B cell (primary cell): ENCODE measurements at regions of chr1 and their contacts with region 1.

Region 1: GRCh38 chr1:159071970-159072582 is 4.5 kb downstream of the AIM2 start:
- DNase-seq: peak; percentile 69
- ATAC-seq: no peak
- H3K4me3 ChIP-seq: no peak overlapping the region
- H3K4me3 Mint-ChIP-seq: peak overlapping the region; percentile 68
- H3K27ac ChIP-seq: peak overlapping the region in 1 of 2 donors; percentile 89
- H3K27ac Mint-ChIP-seq: peak overlapping the region; percentile 86
- H3K4me1 ChIP-seq: peaks cover 56 to 62% of the 10 kb centered on the region in 2 donors
- H3K4me1 Mint-ChIP-seq: peaks cover 65% of the 10 kb centered on the region
- H3K27me3 ChIP-seq: no peaks in the 10 kb centered on the region
- H3K27me3 Mint-ChIP-seq: no peaks in the 10 kb centered on the region
- CTCF ChIP-seq: peak; percentile 94

Region 2: DNA sequence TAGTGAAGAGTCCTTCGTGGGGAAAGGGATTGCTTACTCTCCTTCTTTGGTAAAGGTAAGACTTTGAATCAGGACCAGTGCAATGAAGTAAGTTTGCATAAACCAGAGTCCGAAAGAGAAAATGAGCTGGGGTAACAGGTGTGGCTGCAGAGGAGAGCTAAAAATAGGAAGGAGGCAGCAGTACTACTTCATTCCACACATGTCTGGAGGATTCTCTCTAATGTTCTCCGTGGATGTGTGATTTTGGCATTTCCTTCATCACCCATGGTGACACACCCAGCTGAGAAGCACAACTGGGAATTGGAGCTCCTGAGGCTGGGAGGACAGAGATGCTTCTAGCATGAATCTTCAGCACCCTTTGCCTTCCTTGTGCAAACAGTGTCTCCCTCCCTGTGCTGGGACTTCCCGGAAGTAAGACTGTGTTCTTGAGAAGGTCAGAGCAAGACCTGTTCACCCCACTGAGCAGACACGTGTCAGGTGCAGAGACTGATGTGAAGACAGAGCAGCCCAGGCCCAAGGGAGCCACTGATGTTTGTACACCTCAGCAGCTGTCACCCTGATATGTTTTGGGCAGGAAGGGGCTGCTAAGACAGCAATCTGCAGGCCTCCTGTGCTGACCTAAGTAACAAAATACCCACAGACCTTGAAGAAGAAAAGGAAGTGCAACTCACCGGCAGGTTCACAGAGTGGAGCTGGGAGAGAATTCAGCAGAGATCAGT is 1265.5 kb before region 1 on chr1:
- CTCF ChIA-PET with region 1: no interaction called
- POLR2A ChIA-PET with region 1: no interaction called
- intact Hi-C with region 1: loop called (anchors 5 kb)
- DNase-seq: peak; percentile 92
- ATAC-seq: peak; percentile 92
- H3K4me3 ChIP-seq: peak overlapping the region; percentile 2 to 45 (median 28)
- H3K4me3 Mint-ChIP-seq: peak overlapping the region; percentile 84
- H3K27ac ChIP-seq: peak overlapping the region; percentile 71 to 83
- H3K27ac Mint-ChIP-seq: peak overlapping the region; percentile 87
- H3K4me1 ChIP-seq: peaks cover 86 to 98% of the 10 kb centered on the region in 2 donors
- H3K4me1 Mint-ChIP-seq: peaks cover 87% of the 10 kb centered on the region
- H3K27me3 ChIP-seq: no peaks in the 10 kb centered on the region
- H3K27me3 Mint-ChIP-seq: no peaks in the 10 kb centered on the region
- CTCF ChIP-seq: no peak

Region 3: GRCh38 chr1:158248118-158248517 is 824.0 kb before region 1 on chr1:
- CTCF ChIA-PET with region 1: interaction called, 13 read pairs
- POLR2A ChIA-PET with region 1: no interaction called
- intact Hi-C with region 1: loop called (anchors 2 kb)
- DNase-seq: peak; percentile 88
- ATAC-seq: peak; percentile 84
- H3K4me3 ChIP-seq: peak overlapping the region in 3 of 5 experiments; percentile 16 to 32 (median 26)
- H3K4me3 Mint-ChIP-seq: peak overlapping the region; percentile 49
- H3K27ac ChIP-seq: peak overlapping the region; percentile 40 to 63
- H3K27ac Mint-ChIP-seq: peak overlapping the region; percentile 57
- H3K4me1 ChIP-seq: peaks cover 49 to 51% of the 10 kb centered on the region in 2 donors
- H3K4me1 Mint-ChIP-seq: peaks cover 48% of the 10 kb centered on the region
- H3K27me3 ChIP-seq: no peaks in the 10 kb centered on the region
- H3K27me3 Mint-ChIP-seq: no peaks in the 10 kb centered on the region
- CTCF ChIP-seq: no peak

Region 4: DNA sequence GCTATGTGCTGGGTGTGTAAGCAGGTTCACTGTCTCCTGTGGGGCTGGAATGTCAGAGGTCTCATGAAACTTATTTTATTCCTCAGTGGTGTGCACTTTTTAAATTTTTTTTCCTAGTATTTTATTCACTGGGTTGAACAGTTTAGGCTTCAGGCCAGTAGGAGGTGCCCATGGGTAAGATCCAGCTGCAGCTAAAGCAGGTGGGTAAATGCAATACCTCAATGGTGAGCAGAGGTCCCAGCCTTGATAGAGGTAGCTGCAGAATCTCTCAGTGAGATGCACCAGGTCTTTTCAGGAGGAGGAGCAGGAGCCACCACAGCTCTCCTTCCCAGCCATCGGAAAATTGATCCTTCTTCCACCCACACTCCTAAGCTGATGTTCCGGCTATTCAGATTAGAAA is 278.5 kb before region 1 on chr1:
- CTCF ChIA-PET with region 1: interaction called, 14 read pairs
- POLR2A ChIA-PET with region 1: no interaction called
- intact Hi-C with region 1: loop called (anchors 5 kb)
- DNase-seq: peak; percentile 42
- ATAC-seq: no peak
- H3K4me3 ChIP-seq: no peak overlapping the region
- H3K4me3 Mint-ChIP-seq: no peak overlapping the region
- H3K27ac ChIP-seq: no peak overlapping the region
- H3K27ac Mint-ChIP-seq: no peak overlapping the region
- H3K4me1 ChIP-seq: no peaks in the 10 kb centered on the region
- H3K4me1 Mint-ChIP-seq: no peaks in the 10 kb centered on the region
- H3K27me3 ChIP-seq: peaks cover 0 to 3% (median 0%) of the 10 kb centered on the region in 4 experiments
- H3K27me3 Mint-ChIP-seq: peaks cover 23% of the 10 kb centered on the region
- CTCF ChIP-seq: peak; percentile 49

Region 5: GRCh38 chr1:159009704-159010361 is 62.2 kb before region 1 on chr1 and contains the start of gene IFI16:
- CTCF ChIA-PET with region 1: interaction called, 23 read pairs
- POLR2A ChIA-PET with region 1: interaction called, 14 read pairs
- intact Hi-C with region 1: loop called (anchors 1 kb)
- DNase-seq: peak; percentile 71
- ATAC-seq: peak; percentile 70
- H3K4me3 ChIP-seq: peak within 1 kb of the TSS; percentile 71 to 100 (median 91)
- H3K4me3 Mint-ChIP-seq: peak within 1 kb of the TSS; percentile 98
- H3K27ac ChIP-seq: peak within 1 kb of the TSS; percentile 66 to 88
- H3K27ac Mint-ChIP-seq: peak within 1 kb of the TSS; percentile 94
- H3K4me1 ChIP-seq: peaks cover 56 to 59% of the 10 kb centered on the region in 2 donors
- H3K4me1 Mint-ChIP-seq: peaks cover 67% of the 10 kb centered on the region
- H3K27me3 ChIP-seq: no peaks in the 10 kb centered on the region
- H3K27me3 Mint-ChIP-seq: no peaks in the 10 kb centered on the region
- CTCF ChIP-seq: no peak
- total RNA-seq, gene IFI16: 150 and 176 TPM in 2 replicates

Region 6: DNA sequence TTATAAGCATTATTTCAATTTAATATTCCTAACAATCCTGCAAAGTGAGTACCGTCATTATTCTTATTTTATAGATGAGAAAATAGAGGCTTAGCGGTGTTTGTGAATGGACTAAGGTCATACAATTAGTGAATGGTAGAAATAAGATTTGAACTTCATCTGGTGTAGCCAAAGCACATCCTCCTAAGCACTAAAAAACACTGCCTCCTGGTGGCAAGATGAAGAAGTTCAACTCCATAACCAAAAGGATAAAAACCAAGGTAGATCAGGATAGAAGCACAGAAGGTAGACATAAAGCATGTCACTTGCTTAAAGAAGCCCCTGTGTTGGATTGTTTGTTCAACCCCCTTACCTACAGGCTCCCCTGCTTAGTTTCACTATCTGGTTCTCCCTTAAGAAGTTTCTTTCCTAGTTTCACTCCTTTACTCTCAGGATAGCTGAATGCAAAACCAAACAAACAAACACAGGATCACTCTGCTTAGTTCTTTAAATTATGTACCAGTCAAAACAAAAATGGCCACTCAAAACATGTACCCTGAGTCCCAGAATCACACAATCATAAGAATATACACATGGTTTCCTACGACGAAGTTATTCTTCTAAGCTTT is 17.2 kb after region 1 on chr1:
- CTCF ChIA-PET with region 1: interaction called, 64 read pairs
- POLR2A ChIA-PET with region 1: no interaction called
- intact Hi-C with region 1: loop called (anchors 1 kb)
- DNase-seq: peak; percentile 60
- ATAC-seq: peak; percentile 48
- H3K4me3 ChIP-seq: no peak overlapping the region
- H3K4me3 Mint-ChIP-seq: no peak overlapping the region
- H3K27ac ChIP-seq: no peak overlapping the region
- H3K27ac Mint-ChIP-seq: peak overlapping the region; percentile 57
- H3K4me1 ChIP-seq: peaks cover 16% of the 10 kb centered on the region in 2 donors
- H3K4me1 Mint-ChIP-seq: peaks cover 23% of the 10 kb centered on the region
- H3K27me3 ChIP-seq: no peaks in the 10 kb centered on the region
- H3K27me3 Mint-ChIP-seq: no peaks in the 10 kb centered on the region
- CTCF ChIP-seq: peak; percentile 79